Dendritic cell treated with granulocyte-macrophage colony-stimulating factor and Interleukin-4, amounts not matched to agents 40 ng/mL and 50 ng/mL, for 4 days (primary cell): ENCODE measurements at regions of chr1 and their contacts with region 1.

Region 1: GRCh38 chr1:154736841-154737240 is 128.9 kb upstream of the ADAR start:
- H3K4me3 Mint-ChIP-seq: no peak overlapping the region
- H3K27ac Mint-ChIP-seq: no peak overlapping the region
- H3K4me1 Mint-ChIP-seq: peaks cover 35% of the 10 kb centered on the region
- H3K27me3 Mint-ChIP-seq: peaks cover 32% of the 10 kb centered on the region

Region 2: DNA sequence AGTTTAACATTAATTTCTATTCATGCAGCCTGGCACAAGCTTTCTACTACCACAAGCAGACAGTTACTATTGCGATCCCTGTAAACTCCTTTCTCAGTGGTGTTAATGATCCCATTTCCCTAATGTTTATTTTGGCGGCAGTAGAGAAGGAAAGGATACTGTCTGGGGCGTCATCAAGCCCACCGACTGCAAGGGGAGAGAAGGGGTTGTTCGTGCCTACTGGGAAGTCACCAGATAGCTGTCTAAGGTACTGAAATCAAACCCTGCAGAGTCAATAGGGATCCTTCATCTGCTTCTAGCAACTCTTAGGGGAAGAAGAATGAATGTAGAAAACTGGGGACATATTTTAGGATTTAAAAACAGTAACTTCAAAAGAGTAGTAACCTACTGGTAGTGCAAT is 33.7 kb before region 1 on chr1:
- intact Hi-C with region 1: loop called (anchors 5 kb)
- H3K4me3 Mint-ChIP-seq: no peak overlapping the region
- H3K27ac Mint-ChIP-seq: no peak overlapping the region
- H3K4me1 Mint-ChIP-seq: peaks cover 3% of the 10 kb centered on the region
- H3K27me3 Mint-ChIP-seq: peaks cover 11% of the 10 kb centered on the region

Region 3: GRCh38 chr1:155218854-155219591 is 482.2 kb after region 1 on chr1:
- intact Hi-C with region 1: no loop called
- H3K4me3 Mint-ChIP-seq: no peak overlapping the region
- H3K27ac Mint-ChIP-seq: peak overlapping the region; percentile 77
- H3K4me1 Mint-ChIP-seq: peaks cover 62% of the 10 kb centered on the region
- H3K27me3 Mint-ChIP-seq: no peaks in the 10 kb centered on the region